Naive thymus-derived CD8-positive, alpha-beta T cell (primary cell): ENCODE measurements at regions of chr4 and their contacts with region 1.

Region 1: DNA sequence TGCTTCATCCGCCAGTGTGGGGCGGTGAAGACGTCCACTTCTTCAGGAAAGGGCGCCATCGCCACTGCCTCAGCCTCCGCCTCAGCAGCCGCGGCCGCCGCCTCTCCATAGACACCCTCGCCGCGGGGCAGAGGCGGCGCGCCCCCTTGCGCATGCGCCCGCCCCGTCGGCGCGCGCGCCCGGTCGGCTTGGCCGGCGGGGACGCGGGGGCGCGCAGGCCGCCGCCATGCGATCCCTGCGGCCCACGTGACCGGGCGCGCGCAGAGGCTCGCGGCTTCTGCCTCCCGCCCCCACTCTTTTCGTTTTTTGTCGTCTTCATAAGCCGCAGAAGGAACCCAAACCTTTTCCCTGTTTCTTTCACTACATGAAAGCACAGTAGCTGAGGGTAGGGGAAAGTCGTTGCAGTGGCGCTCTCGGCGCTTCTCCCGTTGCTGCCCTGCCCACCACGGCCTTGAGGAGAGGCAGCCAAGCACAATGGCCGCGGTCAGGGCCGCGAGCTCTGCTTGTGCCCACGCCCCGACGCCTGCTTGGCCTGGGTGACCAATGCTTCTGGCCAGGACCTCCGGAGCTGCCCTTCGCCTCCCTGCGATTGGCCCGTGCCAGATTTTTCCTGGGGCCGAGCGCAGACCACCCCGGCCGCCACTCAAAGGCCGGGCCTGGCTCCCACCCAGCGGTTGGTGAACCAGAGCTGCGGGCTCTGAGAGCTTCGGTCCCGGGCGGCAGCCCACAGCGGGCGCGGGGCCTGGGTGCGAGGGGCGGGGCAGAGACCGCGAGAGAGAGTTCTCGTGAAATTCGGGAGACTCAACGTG is at the start of gene FBXL5:
- DNase-seq: peak; percentile 74 to 92 (median 84)
- ATAC-seq: peak; percentile 80 to 81
- H3K4me3 Mint-ChIP-seq: peak within 1 kb of the TSS; percentile 92 to 99 (median 97)
- H3K27ac Mint-ChIP-seq: peak within 1 kb of the TSS; percentile 94 to 99 (median 98)
- H3K4me1 Mint-ChIP-seq: peaks cover 13 to 48% (median 46%) of the 10 kb centered on the region in 4 donors
- H3K27me3 Mint-ChIP-seq: no peaks in the 10 kb centered on the region
- polyA plus RNA-seq, gene FBXL5: 96.1 to 113 (median 101) TPM

Region 2: GRCh38 chr4:15001869-15002658 is 653.4 kb before region 1 on chr4 and contains the start of gene CPEB2:
- POLR2A ChIA-PET with region 1: interaction called, 17 read pairs
- DNase-seq: peak; percentile 85 to 96 (median 90)
- ATAC-seq: peak; percentile 67 to 75
- H3K4me3 Mint-ChIP-seq: peak within 1 kb of the TSS; percentile 90 to 96 (median 94)
- H3K27ac Mint-ChIP-seq: peak within 1 kb of the TSS; percentile 94 to 99 (median 97)
- H3K4me1 Mint-ChIP-seq: peaks cover 8 to 25% (median 21%) of the 10 kb centered on the region in 4 donors
- H3K27me3 Mint-ChIP-seq: peaks cover 0 to 2% (median 0%) of the 10 kb centered on the region in 5 donors
- polyA plus RNA-seq, gene CPEB2: 0.68 to 1.7 (median 0.91) TPM

Region 3: GRCh38 chr4:15681207-15682015 is 26.0 kb after region 1 on chr4 and contains the start of gene FAM200B:
- POLR2A ChIA-PET with region 1: interaction called, 37 read pairs
- DNase-seq: peak; percentile 89 to 98 (median 94)
- ATAC-seq: peak; percentile 96 to 97
- H3K4me3 Mint-ChIP-seq: peak within 1 kb of the TSS; percentile 92 to 99 (median 96)
- H3K27ac Mint-ChIP-seq: peak within 1 kb of the TSS; percentile 94 to 99 (median 98)
- H3K4me1 Mint-ChIP-seq: peaks cover 24 to 44% (median 39%) of the 10 kb centered on the region in 4 donors
- H3K27me3 Mint-ChIP-seq: peaks cover 0 to 2% (median 0%) of the 10 kb centered on the region in 5 donors
- polyA plus RNA-seq, gene FAM200B: 80.6 to 92.0 (median 81.3) TPM

Region 4: GRCh38 chr4:16176621-16177020 is 521.2 kb after region 1 on chr4:
- POLR2A ChIA-PET with region 1: no interaction called
- DNase-seq: no peak
- ATAC-seq: no peak
- H3K4me3 Mint-ChIP-seq: no peak overlapping the region
- H3K27ac Mint-ChIP-seq: no peak overlapping the region
- H3K4me1 Mint-ChIP-seq: peaks cover 0 to 1% (median 0%) of the 10 kb centered on the region in 4 donors
- H3K27me3 Mint-ChIP-seq: no peaks in the 10 kb centered on the region